HEK293 (cell line): ENCODE measurements at regions of chr1 and their contacts with region 1.

Region 1: GRCh38 chr1:6602669-6603237 is at the start of gene KLHL21:
- H3K4me3 ChIP-seq: peak within 1 kb of the TSS; percentile 58
- H3K27ac ChIP-seq: peak within 1 kb of the TSS; percentile 82
- H3K4me1 ChIP-seq: no peaks in the 10 kb centered on the region
- CTCF ChIP-seq: no peak

Region 2: GRCh38 chr1:6338695-6339094 is 264.1 kb before region 1 on chr1:
- CTCF ChIA-PET with region 1: no interaction called
- POLR2A ChIA-PET with region 1: no interaction called
- H3K4me3 ChIP-seq: no peak overlapping the region
- H3K27ac ChIP-seq: no peak overlapping the region
- H3K4me1 ChIP-seq: peaks cover 6% of the 10 kb centered on the region
- CTCF ChIP-seq: no peak

Region 3: GRCh38 chr1:6613361-6614018 is 10.7 kb after region 1 on chr1 and contains the start of gene PHF13:
- CTCF ChIA-PET with region 1: no interaction called
- POLR2A ChIA-PET with region 1: interaction called, 10 read pairs
- H3K4me3 ChIP-seq: peak within 1 kb of the TSS; percentile 88
- H3K27ac ChIP-seq: peak within 1 kb of the TSS; percentile 91
- H3K4me1 ChIP-seq: peaks cover 3% of the 10 kb centered on the region; the same call in 1 of the 2 replicates
- CTCF ChIP-seq: no peak

Region 4: GRCh38 chr1:6624710-6625583 is 22.2 kb after region 1 on chr1 and contains the start of gene THAP3:
- CTCF ChIA-PET with region 1: no interaction called
- POLR2A ChIA-PET with region 1: interaction called, 11 read pairs
- H3K4me3 ChIP-seq: peak within 1 kb of the TSS; percentile 80
- H3K27ac ChIP-seq: peak within 1 kb of the TSS; percentile 93
- H3K4me1 ChIP-seq: no peaks in the 10 kb centered on the region
- CTCF ChIP-seq: peak; percentile 75